GM12878 (cell line): ENCODE measurements at regions of chr1 and their contacts with region 1.

Region 1: GRCh38 chr1:28088168-28088961 is at the start of gene EYA3:
- DNase-seq: peak; percentile 98
- ATAC-seq: peak; percentile 94
- H3K4me3 ChIP-seq: peak within 1 kb of the TSS; percentile 94
- H3K27ac ChIP-seq: peak within 1 kb of the TSS; percentile 93
- H3K4me1 ChIP-seq: peaks cover 17% of the 10 kb centered on the region
- H3K27me3 ChIP-seq: no peaks in the 10 kb centered on the region
- CTCF ChIP-seq: no peak
- EP300 ChIP-seq: no peak
- POLR2A ChIP-seq: peak; percentile 86; the same call in 1 of the 2 replicates
- RAD21 ChIP-seq: no peak
- polyA plus RNA-seq, gene EYA3: 13.0 to 15.6 TPM

Region 2: DNA sequence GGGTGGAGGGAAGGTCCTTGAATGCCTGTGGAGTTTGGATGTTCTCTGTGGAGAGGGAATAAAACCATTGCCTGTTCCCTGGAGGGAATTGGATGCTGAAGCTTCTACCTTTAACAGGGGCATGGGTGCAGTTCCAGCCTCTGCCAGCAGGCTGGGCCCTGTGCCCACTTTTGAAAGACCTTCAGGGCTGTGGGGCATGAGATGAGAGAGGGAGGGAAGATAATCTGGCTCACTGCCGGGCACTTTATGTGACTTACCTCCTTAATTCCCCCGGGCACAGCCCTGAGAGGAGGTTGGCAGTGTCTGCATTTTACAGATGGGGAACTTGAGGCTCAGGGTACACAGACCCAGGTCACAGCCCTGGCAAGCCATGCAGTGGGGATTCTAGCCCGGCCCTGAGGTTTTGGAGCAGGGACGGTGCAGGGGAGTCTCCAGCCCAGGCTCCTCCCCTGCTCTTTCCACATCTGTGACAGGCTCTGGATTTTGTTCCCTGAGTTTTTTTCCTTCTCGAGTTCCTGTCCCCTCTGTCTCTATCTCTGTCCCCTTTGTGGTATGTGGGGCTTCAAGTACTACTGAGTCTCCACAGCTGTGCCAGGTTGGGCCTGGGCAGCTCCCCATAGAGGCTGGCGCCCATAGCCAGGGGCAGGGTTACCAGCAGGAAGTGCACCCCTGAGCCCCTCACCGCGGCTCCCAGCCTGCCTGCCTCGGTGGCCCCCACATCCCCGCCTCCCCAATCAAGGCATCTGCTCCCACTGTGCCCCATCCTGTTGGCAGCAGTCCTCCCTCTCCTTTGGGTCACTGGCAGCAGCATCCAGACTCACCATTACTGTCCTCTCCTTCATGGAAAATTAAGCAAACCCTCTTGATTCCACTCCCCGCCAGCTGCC is 230.1 kb before region 1 on chr1:
- CTCF ChIA-PET with region 1: interaction called, 5 read pairs
- POLR2A ChIA-PET with region 1: interaction called, 3 read pairs
- RAD21 ChIA-PET with region 1: interaction called, 5 read pairs
- SMC1A ChIA-PET with region 1: interaction called, 9 read pairs
- in situ Hi-C with region 1: loop called (anchors 5 kb)
- intact Hi-C with region 1: loop called (anchors 5 kb)
- DNase-seq: no peak
- ATAC-seq: peak; percentile 91
- H3K4me3 ChIP-seq: no peak overlapping the region
- H3K27ac ChIP-seq: no peak overlapping the region
- H3K4me1 ChIP-seq: peaks cover 17% of the 10 kb centered on the region
- H3K27me3 ChIP-seq: no peaks in the 10 kb centered on the region
- CTCF ChIP-seq: peak; percentile 99 to 100 (median 99); a peak in 5 of 6 replicates
- EP300 ChIP-seq: no peak
- POLR2A ChIP-seq: no peak
- RAD21 ChIP-seq: peak; percentile 100

Region 3: DNA sequence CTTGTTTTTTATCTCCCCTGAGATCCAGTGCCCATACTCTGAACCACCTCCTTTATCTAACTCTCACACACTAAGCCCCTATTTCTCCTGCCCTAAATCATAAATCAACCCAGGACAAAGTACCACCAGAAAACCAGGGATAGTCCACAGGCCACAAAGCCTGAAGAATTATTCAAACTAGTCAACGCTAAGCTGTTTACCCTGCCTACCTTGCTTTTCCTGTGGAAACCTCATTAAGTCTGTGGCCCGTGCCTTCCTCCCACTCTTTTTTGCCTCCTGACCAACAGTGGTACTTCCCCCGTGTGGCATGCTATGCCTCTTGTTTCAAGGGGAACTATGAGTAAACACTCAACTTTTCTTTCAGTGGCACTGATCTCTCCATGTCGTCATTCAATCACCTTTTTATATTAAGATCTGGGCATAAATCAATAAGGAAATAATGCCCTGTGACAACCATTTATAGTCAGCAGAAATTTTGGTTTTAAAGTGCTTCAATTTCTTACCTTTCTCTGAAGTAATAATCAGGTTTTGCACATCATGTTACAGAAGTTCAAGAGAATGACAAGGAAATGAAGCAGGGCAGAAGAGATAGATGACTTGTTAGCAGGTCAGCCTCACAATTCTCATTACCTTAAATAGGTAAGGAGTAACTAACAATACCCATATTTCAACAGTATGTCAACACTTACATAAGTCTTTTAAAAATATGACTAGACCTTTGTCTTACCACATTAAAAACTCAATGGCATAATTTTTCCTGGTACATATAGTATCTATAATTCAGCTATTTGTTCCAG is 32.0 kb before region 1 on chr1:
- CTCF ChIA-PET with region 1: interaction called, 12 read pairs
- POLR2A ChIA-PET with region 1: interaction called, 9 read pairs
- RAD21 ChIA-PET with region 1: interaction called, 65 read pairs
- SMC1A ChIA-PET with region 1: interaction called, 86 read pairs
- in situ Hi-C with region 1: no loop called
- intact Hi-C with region 1: no loop called
- DNase-seq: peak; percentile 69
- ATAC-seq: peak; percentile 94
- H3K4me3 ChIP-seq: no peak overlapping the region
- H3K27ac ChIP-seq: peak overlapping the region; percentile 20; the same call in 1 of the 2 replicates
- H3K4me1 ChIP-seq: no peaks in the 10 kb centered on the region; the same call in 1 of the 2 replicates
- H3K27me3 ChIP-seq: no peaks in the 10 kb centered on the region
- CTCF ChIP-seq: no peak
- EP300 ChIP-seq: peak in 1 of 2 experiments; percentile 25; a peak in 1 of 4 replicates
- POLR2A ChIP-seq: no peak
- RAD21 ChIP-seq: no peak

Region 4: DNA sequence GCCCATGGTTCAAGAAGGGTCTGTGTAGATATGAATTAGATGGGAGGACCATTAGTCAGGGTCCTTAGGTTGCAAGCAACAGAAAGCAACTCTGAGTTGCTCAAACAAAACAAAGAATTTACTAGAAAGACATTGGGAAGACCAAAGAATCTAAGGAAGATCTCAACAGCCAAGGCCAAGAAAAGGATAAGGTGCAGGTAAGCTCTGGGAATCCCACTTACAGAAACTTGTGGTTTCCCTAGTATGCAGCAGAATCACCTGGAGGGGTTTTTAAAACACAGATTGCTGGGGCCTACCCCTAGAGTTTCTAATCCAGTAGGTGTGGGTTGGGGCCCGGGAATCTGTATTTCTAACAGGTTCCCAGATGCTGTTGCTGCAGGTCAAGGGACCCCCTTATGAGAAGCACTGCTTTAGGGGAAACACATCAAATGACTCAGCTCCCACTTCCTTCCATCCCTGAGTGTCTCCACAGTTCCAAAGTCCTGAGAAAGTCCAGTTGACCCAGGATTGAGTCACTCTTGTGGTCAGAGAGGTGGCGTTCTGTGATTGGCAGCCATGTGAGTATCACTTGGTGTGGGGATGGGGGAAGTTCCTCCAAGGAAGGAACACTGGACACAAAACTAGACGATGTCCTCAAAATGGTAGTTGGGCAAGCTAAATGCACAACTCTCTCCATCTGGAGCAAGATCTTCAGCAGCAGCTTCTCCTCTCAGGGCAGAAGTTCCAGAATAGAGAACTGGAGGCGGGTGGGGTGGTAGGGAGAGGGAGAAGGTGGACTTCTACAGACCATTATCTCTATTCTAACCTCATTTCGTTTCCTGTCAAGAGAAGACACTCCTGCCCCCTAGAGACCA is 24.2 kb after region 1 on chr1:
- CTCF ChIA-PET with region 1: interaction called, 57 read pairs
- POLR2A ChIA-PET with region 1: interaction called, 18 read pairs
- RAD21 ChIA-PET with region 1: interaction called, 113 read pairs
- SMC1A ChIA-PET with region 1: interaction called, 43 read pairs
- in situ Hi-C with region 1: no loop called
- intact Hi-C with region 1: loop called (anchors 2 kb)
- DNase-seq: no peak
- ATAC-seq: peak; percentile 43; the same call in 1 of the 3 replicates
- H3K4me3 ChIP-seq: no peak overlapping the region
- H3K27ac ChIP-seq: no peak overlapping the region
- H3K4me1 ChIP-seq: peaks cover 39% of the 10 kb centered on the region
- H3K27me3 ChIP-seq: no peaks in the 10 kb centered on the region
- CTCF ChIP-seq: peak in 1 of 3 experiments; percentile 48; a peak in 1 of 6 replicates
- EP300 ChIP-seq: no peak
- POLR2A ChIP-seq: no peak
- RAD21 ChIP-seq: peak; percentile 60

Region 5: DNA sequence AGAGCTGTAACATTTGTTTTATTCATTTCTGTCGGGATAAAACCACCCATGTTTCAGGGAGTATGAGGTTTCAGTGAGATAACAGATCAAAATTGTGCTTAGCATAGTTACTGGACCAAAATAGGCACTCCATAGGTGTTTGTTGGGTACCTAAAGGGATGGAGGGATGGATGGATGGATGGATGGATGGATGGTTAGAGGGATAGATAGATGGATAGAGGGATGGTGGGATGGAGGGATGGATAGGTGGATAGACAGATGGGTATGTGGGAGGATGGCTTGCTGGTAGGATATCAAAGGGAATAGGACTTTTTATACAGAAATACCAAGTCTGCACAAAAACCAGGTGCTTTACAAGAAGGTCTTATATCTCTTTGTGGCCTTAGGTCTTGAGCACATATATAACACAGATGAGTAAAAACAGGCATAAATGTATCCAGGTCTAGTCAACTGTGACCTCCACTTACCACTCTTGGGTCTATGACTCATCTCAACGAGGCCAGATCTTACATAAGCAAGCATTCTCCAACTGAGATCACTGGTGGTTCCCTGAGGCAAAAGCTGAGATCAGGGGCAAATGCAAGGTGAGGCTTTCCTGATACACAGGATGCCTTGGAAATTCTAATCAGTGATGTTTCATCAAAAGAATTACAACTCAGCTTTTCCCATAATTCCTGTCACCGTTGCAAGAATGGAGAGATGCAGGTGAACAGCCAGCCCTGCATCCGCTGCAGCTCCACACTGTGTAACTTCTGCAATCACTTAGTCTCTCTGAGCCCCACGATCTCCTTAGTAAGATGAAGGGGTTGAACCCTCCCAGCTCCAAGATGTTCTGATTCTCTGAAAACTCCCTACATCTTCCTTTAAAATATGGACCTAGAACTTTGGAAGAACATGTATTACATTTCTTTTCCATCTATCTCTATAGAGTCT is 56.1 kb after region 1 on chr1:
- CTCF ChIA-PET with region 1: interaction called, 54 read pairs
- POLR2A ChIA-PET with region 1: interaction called, 10 read pairs
- RAD21 ChIA-PET with region 1: interaction called, 20 read pairs
- SMC1A ChIA-PET with region 1: interaction called, 72 read pairs
- in situ Hi-C with region 1: no loop called
- intact Hi-C with region 1: loop called (anchors 1 kb)
- DNase-seq: peak; percentile 97
- ATAC-seq: peak; percentile 91
- H3K4me3 ChIP-seq: peak overlapping the region; percentile 17
- H3K27ac ChIP-seq: peak overlapping the region; percentile 62
- H3K4me1 ChIP-seq: peaks cover 51% of the 10 kb centered on the region
- H3K27me3 ChIP-seq: no peaks in the 10 kb centered on the region
- CTCF ChIP-seq: no peak
- EP300 ChIP-seq: peak; percentile 54 to 94; a peak in 3 of 4 replicates
- POLR2A ChIP-seq: no peak
- RAD21 ChIP-seq: no peak

Region 6: GRCh38 chr1:28180306-28181305 is 92.2 kb after region 1 on chr1:
- CTCF ChIA-PET with region 1: interaction called, 57 read pairs
- POLR2A ChIA-PET with region 1: interaction called, 15 read pairs
- RAD21 ChIA-PET with region 1: interaction called, 139 read pairs
- SMC1A ChIA-PET with region 1: interaction called, 101 read pairs
- in situ Hi-C with region 1: no loop called
- intact Hi-C with region 1: no loop called
- DNase-seq: no peak
- ATAC-seq: no peak
- H3K4me3 ChIP-seq: no peak overlapping the region; the same call in 1 of the 2 replicates
- H3K27ac ChIP-seq: no peak overlapping the region
- H3K4me1 ChIP-seq: peaks cover 26% of the 10 kb centered on the region
- H3K27me3 ChIP-seq: no peaks in the 10 kb centered on the region
- CTCF ChIP-seq: no peak
- EP300 ChIP-seq: no peak
- POLR2A ChIP-seq: no peak
- RAD21 ChIP-seq: no peak